Caco-2 (cell line): ENCODE measurements at regions of chr3 and their contacts with region 1.

Region 1: GRCh38 chr3:10140996-10141546 is 507 bp upstream of the VHL start:
- DNase-seq: no peak
- H3K4me3 ChIP-seq: peak overlapping the region; percentile 19
- H3K4me3 Mint-ChIP-seq: peak overlapping the region; percentile 76
- H3K27ac Mint-ChIP-seq: peak overlapping the region; percentile 73
- H3K4me1 ChIP-seq: peaks cover 7% of the 10 kb centered on the region; the same call in 1 of the 2 replicates
- H3K4me1 Mint-ChIP-seq: peaks cover 7% of the 10 kb centered on the region
- H3K27me3 ChIP-seq: no peaks in the 10 kb centered on the region
- H3K27me3 Mint-ChIP-seq: no peaks in the 10 kb centered on the region
- CTCF ChIP-seq: no peak

Region 2: DNA sequence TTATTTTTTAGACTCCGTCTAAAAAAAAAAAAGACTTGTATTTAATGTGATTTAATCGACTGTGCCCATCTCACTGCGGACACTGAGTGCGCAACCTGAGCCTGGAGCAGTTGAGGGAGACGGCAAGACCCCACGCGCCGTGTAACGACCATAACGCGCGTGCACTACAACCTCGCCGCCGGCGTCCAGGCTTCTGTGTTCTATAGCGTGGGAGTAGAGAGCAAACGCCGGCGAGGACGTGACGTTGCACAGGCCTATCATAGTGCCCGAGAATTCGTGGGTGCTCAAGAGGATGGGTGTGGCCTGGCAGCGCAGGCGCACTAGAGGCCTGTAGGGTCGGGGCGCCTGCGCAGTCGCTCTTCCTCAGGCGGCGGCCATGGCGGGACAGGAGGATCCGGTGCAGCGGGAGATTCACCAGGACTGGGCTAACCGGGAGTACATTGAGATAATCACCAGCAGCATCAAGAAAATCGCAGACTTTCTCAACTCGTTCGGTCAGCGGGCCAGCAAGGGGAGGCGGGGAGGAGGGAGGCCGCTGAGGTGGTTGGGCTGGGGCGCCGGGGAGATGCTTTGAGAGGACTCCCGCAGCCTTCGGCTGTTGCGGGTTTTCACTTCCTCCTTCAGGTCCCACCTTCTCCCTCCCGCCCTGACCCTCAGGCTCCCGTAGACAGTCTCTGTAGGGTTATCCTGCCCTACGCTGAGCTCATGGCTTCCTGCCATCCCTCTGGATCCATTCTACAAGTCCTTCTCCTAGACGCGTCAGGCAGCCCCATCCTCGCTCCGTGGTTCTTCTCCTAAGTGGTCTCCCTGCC is 25.5 kb before region 1 on chr3 and contains the start of gene BRK1:
- CTCF ChIA-PET with region 1: no interaction called
- POLR2A ChIA-PET with region 1: interaction called, 3 read pairs
- intact Hi-C with region 1: loop called (anchors 2 kb)
- DNase-seq: peak; percentile 90 to 94
- H3K4me3 ChIP-seq: peak within 1 kb of the TSS; percentile 76
- H3K4me3 Mint-ChIP-seq: peak within 1 kb of the TSS; percentile 99
- H3K27ac Mint-ChIP-seq: peak within 1 kb of the TSS; percentile 96
- H3K4me1 ChIP-seq: no peaks in the 10 kb centered on the region
- H3K4me1 Mint-ChIP-seq: no peaks in the 10 kb centered on the region
- H3K27me3 ChIP-seq: no peaks in the 10 kb centered on the region
- H3K27me3 Mint-ChIP-seq: no peaks in the 10 kb centered on the region
- CTCF ChIP-seq: no peak
- total RNA-seq, gene BRK1: 94.9 and 115 TPM in 2 replicates